HepG2 (cell line): ENCODE measurements at regions of chr15 and their contacts with region 1.

Region 1: GRCh38 chr15:64651573-64652260 is 123.7 kb downstream of the RBPMS2 start:
- DNase-seq: peak; percentile 85
- ATAC-seq: peak; percentile 100
- H3K4me3 ChIP-seq: no peak overlapping the region; a peak in 1 of 6 replicates
- H3K27ac ChIP-seq: peak overlapping the region; percentile 48
- H3K4me1 ChIP-seq: peaks cover 46% of the 10 kb centered on the region
- H3K27me3 ChIP-seq: no peaks in the 10 kb centered on the region
- CTCF ChIP-seq: no peak
- EP300 ChIP-seq: peak in 1 of 2 experiments; percentile 55; a peak in 1 of 4 replicates
- POLR2A ChIP-seq: no peak
- RAD21 ChIP-seq: no peak

Region 2: GRCh38 chr15:64209680-64210334 is 441.9 kb before region 1 on chr15:
- CTCF ChIA-PET with region 1: no interaction called
- POLR2A ChIA-PET with region 1: no interaction called
- in situ Hi-C with region 1: no loop called
- intact Hi-C with region 1: loop called (anchors 10 kb)
- DNase-seq: peak; percentile 32
- ATAC-seq: no peak
- H3K4me3 ChIP-seq: no peak overlapping the region
- H3K27ac ChIP-seq: no peak overlapping the region
- H3K4me1 ChIP-seq: no peaks in the 10 kb centered on the region
- H3K27me3 ChIP-seq: no peaks in the 10 kb centered on the region
- CTCF ChIP-seq: peak; percentile 38
- EP300 ChIP-seq: no peak
- POLR2A ChIP-seq: no peak
- RAD21 ChIP-seq: peak; percentile 51; the same call in 1 of the 2 replicates

Region 3: GRCh38 chr15:64430000-64430735 is 221.5 kb before region 1 on chr15:
- CTCF ChIA-PET with region 1: no interaction called
- POLR2A ChIA-PET with region 1: no interaction called
- in situ Hi-C with region 1: loop called (anchors 10 kb)
- intact Hi-C with region 1: loop called (anchors 10 kb)
- DNase-seq: no peak
- ATAC-seq: no peak
- H3K4me3 ChIP-seq: no peak overlapping the region
- H3K27ac ChIP-seq: no peak overlapping the region
- H3K4me1 ChIP-seq: no peaks in the 10 kb centered on the region
- H3K27me3 ChIP-seq: no peaks in the 10 kb centered on the region
- CTCF ChIP-seq: no peak
- EP300 ChIP-seq: no peak
- POLR2A ChIP-seq: no peak
- RAD21 ChIP-seq: no peak

Region 4: DNA sequence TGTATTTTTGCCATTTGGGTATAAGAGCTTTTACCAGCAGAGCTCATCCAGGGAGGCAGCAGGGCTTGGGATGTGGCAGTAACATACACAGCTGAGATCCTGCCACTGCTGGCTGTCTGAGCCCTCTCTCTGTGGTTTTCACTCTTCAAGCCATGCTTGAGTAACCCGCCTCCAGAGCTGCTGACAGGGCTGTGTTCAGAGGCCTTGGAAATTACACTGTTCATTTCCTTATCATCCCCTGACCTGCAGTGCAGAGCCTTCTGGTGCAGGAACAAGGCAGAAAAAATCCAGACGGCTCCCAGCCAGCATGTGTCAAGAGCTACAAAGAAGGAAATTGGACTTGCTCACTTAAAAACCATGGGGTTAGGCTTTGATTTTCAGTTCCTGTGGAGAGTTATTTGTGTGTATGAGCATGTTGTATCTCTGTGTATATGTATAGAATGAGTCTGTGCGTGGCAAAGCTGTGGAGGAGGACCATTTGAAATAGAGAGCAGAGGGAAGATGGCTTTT is 144.4 kb before region 1 on chr15:
- CTCF ChIA-PET with region 1: no interaction called
- POLR2A ChIA-PET with region 1: no interaction called
- in situ Hi-C with region 1: no loop called
- intact Hi-C with region 1: loop called (anchors 5 kb)
- DNase-seq: peak; percentile 36
- ATAC-seq: peak; percentile 95
- H3K4me3 ChIP-seq: no peak overlapping the region
- H3K27ac ChIP-seq: peak overlapping the region; percentile 37
- H3K4me1 ChIP-seq: peaks cover 40% of the 10 kb centered on the region
- H3K27me3 ChIP-seq: no peaks in the 10 kb centered on the region
- CTCF ChIP-seq: no peak
- EP300 ChIP-seq: no peak
- POLR2A ChIP-seq: no peak
- RAD21 ChIP-seq: no peak

Region 5: GRCh38 chr15:64536244-64536836 is 115.4 kb before region 1 on chr15:
- CTCF ChIA-PET with region 1: no interaction called
- POLR2A ChIA-PET with region 1: no interaction called
- in situ Hi-C with region 1: no loop called
- intact Hi-C with region 1: no loop called
- DNase-seq: peak; percentile 85
- ATAC-seq: peak; percentile 90
- H3K4me3 ChIP-seq: no peak overlapping the region; a peak in 1 of 6 replicates
- H3K27ac ChIP-seq: peak overlapping the region; percentile 48
- H3K4me1 ChIP-seq: peaks cover 32% of the 10 kb centered on the region
- H3K27me3 ChIP-seq: no peaks in the 10 kb centered on the region
- CTCF ChIP-seq: no peak
- EP300 ChIP-seq: peak in 1 of 2 experiments; percentile 35; a peak in 1 of 4 replicates
- POLR2A ChIP-seq: no peak
- RAD21 ChIP-seq: no peak

Region 6: GRCh38 chr15:64611085-64611725 is 40.5 kb before region 1 on chr15:
- CTCF ChIA-PET with region 1: no interaction called
- POLR2A ChIA-PET with region 1: interaction called, 11 read pairs
- in situ Hi-C with region 1: no loop called
- intact Hi-C with region 1: loop called (anchors 5 kb)
- DNase-seq: peak; percentile 48
- ATAC-seq: peak; percentile 71
- H3K4me3 ChIP-seq: peak overlapping the region in 2 of 3 experiments; percentile 13 to 17; a peak in 3 of 6 replicates
- H3K27ac ChIP-seq: peak overlapping the region; percentile 74
- H3K4me1 ChIP-seq: peaks cover 45% of the 10 kb centered on the region
- H3K27me3 ChIP-seq: no peaks in the 10 kb centered on the region
- CTCF ChIP-seq: no peak
- EP300 ChIP-seq: peak in 1 of 2 experiments; percentile 48; a peak in 1 of 4 replicates
- POLR2A ChIP-seq: no peak
- RAD21 ChIP-seq: no peak

Region 7: DNA sequence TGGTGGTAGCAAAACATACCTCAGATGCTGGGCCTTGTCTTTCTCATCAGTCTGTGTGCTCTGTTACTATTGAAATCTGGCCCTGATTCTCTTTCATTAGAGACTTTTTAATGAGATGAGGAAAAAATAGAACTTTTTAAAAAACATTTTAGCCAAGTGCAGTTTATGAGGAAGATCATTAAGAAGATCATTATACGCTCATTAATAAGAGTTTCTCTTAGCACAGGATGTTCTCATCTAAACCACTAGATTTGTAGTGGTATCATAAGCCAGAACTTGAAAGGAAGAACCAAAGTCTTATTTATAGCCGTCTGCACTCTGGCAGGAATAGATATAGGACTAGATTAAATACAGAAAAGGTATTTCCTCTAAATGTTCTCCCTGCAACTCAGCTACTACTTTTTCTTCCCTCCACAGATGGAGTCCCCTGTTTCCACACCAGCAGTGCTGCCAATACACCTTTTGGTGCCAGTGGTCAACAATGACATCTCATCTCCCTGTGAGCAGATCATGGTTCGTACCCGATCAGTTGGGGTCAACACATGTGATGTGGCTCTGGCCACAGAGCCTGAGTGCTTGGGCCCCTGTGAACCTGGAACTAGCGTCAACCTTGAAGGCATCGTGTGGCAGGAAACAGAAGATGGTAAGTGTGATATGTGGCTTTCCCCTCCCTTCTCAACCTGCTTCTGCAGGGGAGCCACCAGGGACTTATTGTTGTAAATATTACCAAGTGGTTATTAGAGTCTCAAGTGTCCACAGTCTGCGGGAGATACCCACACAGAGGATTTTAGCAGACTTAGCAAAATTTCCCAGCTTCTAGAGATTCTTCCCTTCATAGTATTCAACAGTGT is 29.1 kb before region 1 on chr15:
- CTCF ChIA-PET with region 1: no interaction called
- POLR2A ChIA-PET with region 1: no interaction called
- in situ Hi-C with region 1: no loop called
- intact Hi-C with region 1: no loop called
- DNase-seq: no peak
- ATAC-seq: no peak
- H3K4me3 ChIP-seq: no peak overlapping the region
- H3K27ac ChIP-seq: no peak overlapping the region
- H3K4me1 ChIP-seq: peaks cover 20% of the 10 kb centered on the region
- H3K27me3 ChIP-seq: no peaks in the 10 kb centered on the region; a peak in 1 of 5 replicates
- CTCF ChIP-seq: no peak
- EP300 ChIP-seq: no peak
- POLR2A ChIP-seq: no peak
- RAD21 ChIP-seq: no peak

Region 8: DNA sequence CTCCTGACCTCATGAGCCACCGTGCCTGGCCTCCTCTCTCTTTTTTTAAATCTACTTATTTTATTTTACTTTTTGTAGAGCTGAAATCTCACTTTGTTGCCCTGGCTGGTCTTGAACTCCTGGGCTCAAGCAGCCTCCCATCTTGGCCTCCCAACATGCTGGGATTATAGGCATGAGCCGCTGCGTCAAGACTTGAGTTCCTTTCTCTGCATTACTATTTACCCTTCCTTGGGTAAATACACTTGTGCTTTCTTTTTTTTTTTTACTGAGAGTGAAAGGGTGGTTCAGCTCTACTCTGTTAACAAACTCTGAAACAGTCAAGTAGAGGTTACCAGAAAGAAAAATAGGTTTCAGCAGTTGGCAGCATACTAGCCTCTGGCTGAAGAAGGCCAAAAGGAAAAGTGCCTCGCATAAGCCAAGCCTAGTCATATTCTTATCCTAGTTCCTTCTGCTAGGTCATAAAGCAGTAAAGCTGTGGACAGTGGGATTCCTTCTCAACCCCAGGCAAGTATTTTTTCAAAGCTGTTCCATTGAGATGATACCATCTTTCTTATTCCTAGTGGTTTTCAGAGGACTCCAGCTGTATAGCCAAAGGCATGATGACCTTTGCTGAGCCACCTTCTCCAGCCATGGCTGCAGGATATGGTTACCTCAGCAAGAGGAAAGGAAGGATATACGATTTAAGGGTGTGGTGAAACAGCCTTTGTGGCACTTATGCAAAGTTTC is 11.4 kb before region 1 on chr15:
- CTCF ChIA-PET with region 1: no interaction called
- POLR2A ChIA-PET with region 1: interaction called, 17 read pairs
- in situ Hi-C with region 1: no loop called
- intact Hi-C with region 1: no loop called
- DNase-seq: peak; percentile 35
- ATAC-seq: no peak; the same call in 2 of the 3 replicates
- H3K4me3 ChIP-seq: 0 out of 6 replicates have a peak overlapping the region, but pooled peaks of 1 of the 3 experiments have one; percentile 1
- H3K27ac ChIP-seq: peak overlapping the region; percentile 68
- H3K4me1 ChIP-seq: peaks cover 83% of the 10 kb centered on the region
- H3K27me3 ChIP-seq: no peaks in the 10 kb centered on the region
- CTCF ChIP-seq: no peak
- EP300 ChIP-seq: peak in 1 of 2 experiments; percentile 28; a peak in 1 of 4 replicates
- POLR2A ChIP-seq: no peak
- RAD21 ChIP-seq: no peak